CD8-positive, alpha-beta T cell (primary cell): ENCODE measurements at regions of chr20 and their contacts with region 1.

Region 1: GRCh38 chr20:38875175-38875993 is 50.8 kb upstream of the FAM83D start:
- DNase-seq: peak; percentile 53 to 93 (median 78)
- ATAC-seq: peak; percentile 51
- H3K4me3 ChIP-seq: peak overlapping the region; percentile 21 to 32
- H3K4me3 Mint-ChIP-seq: peak overlapping the region; percentile 82
- H3K27ac ChIP-seq: peak overlapping the region; percentile 61 to 87
- H3K27ac Mint-ChIP-seq: peak overlapping the region; percentile 98
- H3K4me1 ChIP-seq: peaks cover 59% of the 10 kb centered on the region
- H3K4me1 Mint-ChIP-seq: peaks cover 90% of the 10 kb centered on the region
- H3K27me3 ChIP-seq: no peaks in the 10 kb centered on the region
- H3K27me3 Mint-ChIP-seq: no peaks in the 10 kb centered on the region
- CTCF ChIP-seq: no peak

Region 2: GRCh38 chr20:38790200-38791053 is 85.0 kb before region 1 on chr20:
- CTCF ChIA-PET with region 1: interaction called, 11 read pairs
- POLR2A ChIA-PET with region 1: interaction called, 3 read pairs
- intact Hi-C with region 1: no loop called
- DNase-seq: peak in 8 of 9 experiments; percentile 17 to 79 (median 54)
- ATAC-seq: peak; percentile 90
- H3K4me3 ChIP-seq: no peak overlapping the region
- H3K4me3 Mint-ChIP-seq: peak overlapping the region; percentile 30
- H3K27ac ChIP-seq: no peak overlapping the region
- H3K27ac Mint-ChIP-seq: no peak overlapping the region
- H3K4me1 ChIP-seq: no peaks in the 10 kb centered on the region
- H3K4me1 Mint-ChIP-seq: peaks cover 15% of the 10 kb centered on the region
- H3K27me3 ChIP-seq: no peaks in the 10 kb centered on the region
- H3K27me3 Mint-ChIP-seq: no peaks in the 10 kb centered on the region
- CTCF ChIP-seq: peak; percentile 69

Region 3: DNA sequence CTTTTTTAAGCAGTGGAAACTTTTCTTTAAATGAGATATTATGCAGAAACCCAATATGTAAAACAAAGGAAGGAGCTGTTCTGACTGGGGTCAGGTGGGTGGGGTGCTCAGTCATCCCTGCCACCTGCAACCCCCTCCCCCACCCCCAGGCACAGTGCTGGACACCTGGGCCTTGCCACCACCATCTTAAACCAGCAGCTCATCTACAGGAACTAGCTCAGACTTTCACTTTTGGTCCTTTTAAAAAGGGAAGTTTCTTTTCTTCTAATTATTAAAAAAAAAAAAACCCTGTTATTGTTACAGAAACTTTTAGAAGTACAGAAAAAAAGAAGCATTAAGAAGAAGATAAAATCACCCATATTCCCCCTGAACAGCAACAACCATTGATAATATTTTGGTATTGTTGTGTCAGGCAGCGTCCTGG is 32.8 kb before region 1 on chr20:
- CTCF ChIA-PET with region 1: interaction called, 7 read pairs
- POLR2A ChIA-PET with region 1: interaction called, 19 read pairs
- intact Hi-C with region 1: loop called (anchors 1 kb)
- DNase-seq: peak in 3 of 9 experiments; percentile 57 to 72 (median 58)
- ATAC-seq: peak; percentile 19
- H3K4me3 ChIP-seq: no peak overlapping the region
- H3K4me3 Mint-ChIP-seq: peak overlapping the region; percentile 64
- H3K27ac ChIP-seq: peak overlapping the region; percentile 35 to 95
- H3K27ac Mint-ChIP-seq: peak overlapping the region; percentile 96
- H3K4me1 ChIP-seq: peaks cover 58% of the 10 kb centered on the region
- H3K4me1 Mint-ChIP-seq: peaks cover 84% of the 10 kb centered on the region
- H3K27me3 ChIP-seq: no peaks in the 10 kb centered on the region
- H3K27me3 Mint-ChIP-seq: no peaks in the 10 kb centered on the region
- CTCF ChIP-seq: no peak

Region 4: GRCh38 chr20:38863024-38863851 is 12.1 kb before region 1 on chr20:
- CTCF ChIA-PET with region 1: interaction called, 6 read pairs
- POLR2A ChIA-PET with region 1: interaction called, 5 read pairs
- intact Hi-C with region 1: loop called in 1 of 2 experiments (anchors 1 kb)
- DNase-seq: peak in 6 of 9 experiments; percentile 42 to 89 (median 67)
- ATAC-seq: peak; percentile 80
- H3K4me3 ChIP-seq: no peak overlapping the region
- H3K4me3 Mint-ChIP-seq: peak overlapping the region; percentile 37
- H3K27ac ChIP-seq: peak overlapping the region in 1 of 2 experiments; percentile 58
- H3K27ac Mint-ChIP-seq: peak overlapping the region; percentile 87
- H3K4me1 ChIP-seq: peaks cover 29% of the 10 kb centered on the region
- H3K4me1 Mint-ChIP-seq: peaks cover 54% of the 10 kb centered on the region
- H3K27me3 ChIP-seq: no peaks in the 10 kb centered on the region
- H3K27me3 Mint-ChIP-seq: no peaks in the 10 kb centered on the region
- CTCF ChIP-seq: no peak

Region 5: GRCh38 chr20:38926142-38926933 is 51.0 kb after region 1 on chr20 and contains the start of gene FAM83D:
- CTCF ChIA-PET with region 1: no interaction called
- POLR2A ChIA-PET with region 1: no interaction called
- intact Hi-C with region 1: no loop called
- DNase-seq: peak; percentile 77 to 96 (median 91)
- ATAC-seq: peak; percentile 93
- H3K4me3 ChIP-seq: peak within 1 kb of the TSS; percentile 52 to 78
- H3K4me3 Mint-ChIP-seq: peak within 1 kb of the TSS; percentile 79
- H3K27ac ChIP-seq: peak within 1 kb of the TSS; percentile 35 to 47
- H3K27ac Mint-ChIP-seq: peak within 1 kb of the TSS; percentile 34
- H3K4me1 ChIP-seq: peaks cover 14% of the 10 kb centered on the region
- H3K4me1 Mint-ChIP-seq: peaks cover 25% of the 10 kb centered on the region
- H3K27me3 ChIP-seq: no peaks in the 10 kb centered on the region
- H3K27me3 Mint-ChIP-seq: no peaks in the 10 kb centered on the region
- CTCF ChIP-seq: no peak
- total RNA-seq, gene FAM83D: 5.3 to 6.3 TPM